ENCODE measurements at regions of chr20 and their contacts with region 1.

Region 1: DNA sequence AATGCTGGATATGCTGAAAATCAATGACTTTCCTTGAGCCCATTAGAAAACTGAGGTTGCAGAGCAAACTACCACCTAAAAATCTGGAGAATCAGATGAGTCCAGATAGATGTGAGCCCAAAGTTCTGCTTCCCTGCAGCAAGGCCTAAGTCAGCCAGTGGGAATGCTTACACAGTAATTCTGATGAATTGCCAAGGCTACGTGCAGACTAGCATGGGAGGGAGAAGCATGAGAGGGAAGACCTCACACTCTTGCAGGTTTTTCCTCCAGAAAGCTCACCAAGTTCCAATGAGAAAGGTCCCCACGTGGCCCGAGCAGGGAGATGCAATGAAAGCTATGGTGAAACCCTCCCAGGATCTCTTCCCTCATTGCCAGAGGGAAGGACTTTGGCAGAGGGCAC is 104.8 kb upstream of the SIRPA start:
- DNase-seq: no peak
- ATAC-seq: no peak
- H3K4me3 ChIP-seq: no peak overlapping the region
- H3K27ac ChIP-seq: 0 out of 2 replicates have a peak overlapping the region, but pooled peaks have one; percentile 13
- H3K4me1 ChIP-seq: no peaks in the 10 kb centered on the region
- H3K27me3 ChIP-seq: peaks cover 50% of the 10 kb centered on the region
- CTCF ChIP-seq: no peak
- POLR2A ChIP-seq: no peak
- RAD21 ChIP-seq: no peak

Region 2: GRCh38 chr20:1646975-1647431 is 143.4 kb before region 1 on chr20:
- CTCF ChIA-PET with region 1: no interaction called
- POLR2A ChIA-PET with region 1: no interaction called
- dilution Hi-C with region 1: no loop called
- in situ Hi-C with region 1: no loop called
- intact Hi-C with region 1: no loop called
- DNase-seq: no peak
- ATAC-seq: no peak
- H3K4me3 ChIP-seq: no peak overlapping the region
- H3K27ac ChIP-seq: no peak overlapping the region
- H3K4me1 ChIP-seq: no peaks in the 10 kb centered on the region
- H3K27me3 ChIP-seq: no peaks in the 10 kb centered on the region
- CTCF ChIP-seq: no peak
- POLR2A ChIP-seq: no peak
- RAD21 ChIP-seq: no peak

Region 3: DNA sequence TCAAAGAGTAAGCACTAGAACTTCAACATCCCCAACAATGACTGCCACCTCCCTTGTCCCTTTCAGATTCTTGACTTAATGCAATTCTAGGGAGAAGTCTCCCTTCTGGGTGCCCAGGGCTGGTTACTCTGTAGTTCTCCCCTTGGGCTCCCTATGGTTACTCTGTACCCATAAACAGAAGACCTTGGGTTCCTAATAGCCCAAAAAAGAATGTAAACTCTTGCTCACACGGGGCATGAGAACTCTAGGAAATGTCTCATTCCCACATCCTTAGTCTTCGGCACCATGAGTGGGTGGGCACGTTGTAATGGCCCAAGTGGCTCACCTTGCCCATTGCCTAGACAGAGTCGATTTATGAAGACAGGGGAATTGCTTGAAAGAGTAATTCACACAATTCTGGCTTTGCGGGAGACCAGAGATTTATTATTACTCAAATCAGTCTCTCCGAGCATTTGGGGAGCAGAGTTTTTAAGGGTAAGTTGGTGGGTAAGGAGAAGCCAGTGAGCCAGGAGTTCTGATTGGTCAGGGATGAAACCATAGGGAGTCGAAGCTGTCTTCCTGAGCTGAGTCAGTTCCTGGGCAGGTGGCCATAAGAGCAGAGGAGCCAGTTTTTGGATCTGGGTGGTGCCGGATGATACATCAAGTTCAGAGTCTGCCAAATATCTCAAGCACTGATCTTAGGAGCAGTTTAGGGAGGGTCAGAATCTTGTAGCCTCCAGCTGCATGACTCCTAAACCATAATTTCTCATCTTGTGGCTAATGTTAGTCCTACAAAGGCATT is 71.6 kb before region 1 on chr20:
- CTCF ChIA-PET with region 1: no interaction called
- POLR2A ChIA-PET with region 1: no interaction called
- dilution Hi-C with region 1: no loop called
- in situ Hi-C with region 1: no loop called
- intact Hi-C with region 1: no loop called
- DNase-seq: peak; percentile 46
- ATAC-seq: no peak
- H3K4me3 ChIP-seq: no peak overlapping the region
- H3K27ac ChIP-seq: no peak overlapping the region
- H3K4me1 ChIP-seq: no peaks in the 10 kb centered on the region
- H3K27me3 ChIP-seq: peaks cover 6% of the 10 kb centered on the region
- CTCF ChIP-seq: no peak
- POLR2A ChIP-seq: no peak
- RAD21 ChIP-seq: no peak

Region 4: DNA sequence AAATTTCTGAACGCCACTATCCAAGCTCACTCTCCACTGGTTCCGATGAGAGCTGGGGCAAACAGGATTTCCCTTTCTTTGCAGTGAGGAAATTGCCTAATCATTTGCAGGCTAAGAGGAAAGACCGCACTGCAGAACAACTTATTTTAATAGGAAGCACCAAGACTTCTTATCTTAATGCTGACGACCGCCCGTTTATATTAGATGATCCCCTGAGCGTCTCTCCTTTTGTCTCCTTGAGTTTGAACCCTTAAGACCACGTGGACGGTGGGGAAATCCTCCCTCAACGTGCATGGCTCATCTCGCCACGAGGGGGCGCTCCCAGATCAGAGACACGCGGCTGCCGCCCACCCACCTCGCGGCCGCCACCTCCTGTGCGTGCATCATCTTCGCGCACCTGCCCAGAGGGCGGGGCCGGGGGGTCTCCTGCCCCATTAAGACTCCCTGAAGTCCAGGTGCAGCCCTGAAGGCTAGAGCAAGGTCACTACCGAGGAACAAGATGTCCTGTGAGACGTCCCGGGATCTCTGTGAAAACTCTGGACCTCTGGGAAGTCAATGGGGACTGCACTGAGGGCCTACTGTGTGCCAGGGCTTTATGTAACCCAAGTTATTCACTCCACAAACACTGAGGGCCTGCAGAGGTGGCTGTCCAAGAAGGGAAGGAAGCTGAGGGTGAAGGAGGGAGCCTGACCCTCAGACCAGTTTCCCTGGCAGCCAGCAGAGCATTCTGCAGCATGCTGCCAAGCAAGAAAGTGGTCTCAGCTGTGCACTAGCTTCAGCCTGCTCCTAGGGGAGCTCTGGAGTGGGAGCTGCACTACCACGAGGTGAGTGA is 175.3 kb after region 1 on chr20:
- CTCF ChIA-PET with region 1: no interaction called
- POLR2A ChIA-PET with region 1: no interaction called
- dilution Hi-C with region 1: no loop called
- in situ Hi-C with region 1: loop called (anchors 10 kb)
- intact Hi-C with region 1: no loop called
- DNase-seq: peak; percentile 54
- ATAC-seq: peak; percentile 83
- H3K4me3 ChIP-seq: no peak overlapping the region
- H3K27ac ChIP-seq: no peak overlapping the region
- H3K4me1 ChIP-seq: no peaks in the 10 kb centered on the region
- H3K27me3 ChIP-seq: peaks cover 60% of the 10 kb centered on the region
- CTCF ChIP-seq: peak; percentile 86
- POLR2A ChIP-seq: no peak
- RAD21 ChIP-seq: peak; percentile 84